ENCODE measurements at regions of chr9 and their contacts with region 1.

Region 1: DNA sequence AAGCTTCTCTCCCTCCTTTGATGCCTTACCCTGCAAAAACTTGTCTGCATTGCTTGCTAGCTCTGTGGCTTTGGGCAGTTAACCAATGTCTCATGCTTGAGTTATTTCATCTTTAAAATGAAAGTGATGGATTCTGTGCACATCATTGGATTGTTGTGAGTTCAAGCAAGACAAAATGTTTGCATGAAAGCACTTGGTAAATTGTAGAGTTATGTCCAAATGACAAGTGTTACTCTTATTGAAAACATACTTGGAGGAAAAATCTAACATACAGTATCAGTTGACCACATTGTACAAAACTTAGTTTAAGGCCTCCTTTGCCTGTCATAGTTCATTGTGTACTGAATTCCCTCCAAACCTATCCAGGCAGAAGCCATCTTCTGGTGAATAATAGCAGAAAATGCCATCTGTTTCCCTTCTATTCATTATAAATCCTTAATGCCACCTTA is 30.0 kb downstream of the TGFBR1 start:
- DNase-seq: no peak
- H3K4me3 Mint-ChIP-seq: peak overlapping the region; percentile 66
- H3K27ac Mint-ChIP-seq: peak overlapping the region; percentile 37
- H3K4me1 Mint-ChIP-seq: peaks cover 66% of the 10 kb centered on the region
- H3K27me3 Mint-ChIP-seq: no peaks in the 10 kb centered on the region

Region 2: GRCh38 chr9:99085949-99086948 is 48.7 kb before region 1 on chr9:
- intact Hi-C with region 1: no loop called
- DNase-seq: no peak
- H3K4me3 Mint-ChIP-seq: no peak overlapping the region
- H3K27ac Mint-ChIP-seq: no peak overlapping the region
- H3K4me1 Mint-ChIP-seq: peaks cover 32% of the 10 kb centered on the region
- H3K27me3 Mint-ChIP-seq: peaks cover 3% of the 10 kb centered on the region

Region 3: DNA sequence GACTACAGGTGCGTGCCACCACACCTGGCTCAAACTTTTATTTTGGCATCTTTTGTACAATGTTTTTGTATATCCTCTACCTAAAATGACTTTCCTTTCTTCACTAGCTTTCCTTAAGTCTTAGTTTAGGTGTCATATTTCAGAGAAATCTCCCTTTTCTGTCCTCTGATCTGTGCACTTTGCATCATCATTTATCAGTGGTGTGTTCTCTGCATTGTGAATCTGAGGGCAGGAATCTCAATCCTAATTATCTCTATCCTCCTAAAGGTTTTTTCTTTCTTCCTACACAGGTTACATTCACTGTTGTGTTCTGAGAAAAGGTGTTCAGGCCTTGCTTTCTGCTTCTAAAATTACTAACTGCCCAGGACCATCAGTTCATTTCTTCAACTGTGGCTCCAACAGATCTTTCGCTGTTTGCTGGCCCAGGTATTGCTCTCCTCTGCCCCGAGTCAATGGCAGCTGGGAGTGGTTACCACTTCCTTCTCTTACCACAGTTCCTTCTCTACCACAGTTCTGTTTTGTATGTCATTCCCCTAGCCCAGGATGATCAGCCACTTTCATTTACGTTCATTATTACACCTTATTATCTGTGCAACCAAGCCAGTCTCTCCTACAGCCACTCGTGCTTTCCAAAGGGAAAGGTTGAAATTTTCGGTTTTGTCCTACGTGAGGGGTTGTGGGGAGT is 16.0 kb before region 1 on chr9:
- intact Hi-C with region 1: loop called (anchors 2 kb)
- DNase-seq: peak; percentile 50
- H3K4me3 Mint-ChIP-seq: peak overlapping the region; percentile 77
- H3K27ac Mint-ChIP-seq: peak overlapping the region; percentile 83
- H3K4me1 Mint-ChIP-seq: peaks cover 78% of the 10 kb centered on the region
- H3K27me3 Mint-ChIP-seq: no peaks in the 10 kb centered on the region